Right ventricle myocardium inferior (tissue), 1 donor: ENCODE measurements at regions of chr19 and their contacts with region 1.

Region 1: GRCh38 chr19:9435279-9436268 is at the start of gene ZNF266:
- DNase-seq: peak; percentile 93
- ATAC-seq: peak; percentile 93
- total RNA-seq, gene ZNF266: 7.2 TPM

Region 2: DNA sequence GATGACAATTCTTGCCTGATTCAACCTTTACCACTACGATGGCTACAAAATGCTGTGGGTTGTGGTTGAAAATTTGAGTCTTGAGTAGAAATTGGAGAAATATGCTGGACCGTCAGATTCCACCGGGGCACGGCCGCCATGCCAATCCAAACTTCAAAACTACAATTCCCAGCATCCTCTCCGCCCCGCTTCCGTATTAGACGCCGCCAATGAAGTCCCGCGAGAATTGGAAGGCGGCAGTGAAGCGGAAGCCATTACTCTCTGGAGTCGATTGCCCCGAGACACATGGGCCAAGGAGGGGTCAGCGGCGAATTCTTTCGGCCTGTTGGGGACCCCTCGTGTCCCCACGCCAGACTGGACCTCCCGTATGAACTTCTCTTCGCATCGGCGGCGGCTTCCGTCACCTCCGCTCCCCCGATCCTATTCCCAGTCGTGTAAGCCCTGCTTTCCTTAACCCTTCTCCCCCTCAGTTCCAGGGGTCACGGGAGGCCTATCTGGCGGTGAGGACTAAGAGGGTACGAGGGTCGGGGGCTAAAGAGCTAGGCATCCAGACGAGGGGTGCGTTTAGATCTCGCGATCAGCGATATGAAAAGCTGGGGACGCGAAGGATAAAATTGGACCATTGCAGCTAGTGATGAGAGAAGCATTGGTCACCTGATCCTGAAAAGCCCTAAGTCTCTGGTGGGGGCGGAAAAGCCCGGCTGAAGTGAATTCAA is 295.3 kb before region 1 on chr19 and contains the start of gene ZNF317:
- intact Hi-C with region 1: loop called (anchors 10 kb)
- DNase-seq: peak; percentile 97
- ATAC-seq: peak; percentile 97
- total RNA-seq, gene ZNF317: 14.7 TPM

Region 3: DNA sequence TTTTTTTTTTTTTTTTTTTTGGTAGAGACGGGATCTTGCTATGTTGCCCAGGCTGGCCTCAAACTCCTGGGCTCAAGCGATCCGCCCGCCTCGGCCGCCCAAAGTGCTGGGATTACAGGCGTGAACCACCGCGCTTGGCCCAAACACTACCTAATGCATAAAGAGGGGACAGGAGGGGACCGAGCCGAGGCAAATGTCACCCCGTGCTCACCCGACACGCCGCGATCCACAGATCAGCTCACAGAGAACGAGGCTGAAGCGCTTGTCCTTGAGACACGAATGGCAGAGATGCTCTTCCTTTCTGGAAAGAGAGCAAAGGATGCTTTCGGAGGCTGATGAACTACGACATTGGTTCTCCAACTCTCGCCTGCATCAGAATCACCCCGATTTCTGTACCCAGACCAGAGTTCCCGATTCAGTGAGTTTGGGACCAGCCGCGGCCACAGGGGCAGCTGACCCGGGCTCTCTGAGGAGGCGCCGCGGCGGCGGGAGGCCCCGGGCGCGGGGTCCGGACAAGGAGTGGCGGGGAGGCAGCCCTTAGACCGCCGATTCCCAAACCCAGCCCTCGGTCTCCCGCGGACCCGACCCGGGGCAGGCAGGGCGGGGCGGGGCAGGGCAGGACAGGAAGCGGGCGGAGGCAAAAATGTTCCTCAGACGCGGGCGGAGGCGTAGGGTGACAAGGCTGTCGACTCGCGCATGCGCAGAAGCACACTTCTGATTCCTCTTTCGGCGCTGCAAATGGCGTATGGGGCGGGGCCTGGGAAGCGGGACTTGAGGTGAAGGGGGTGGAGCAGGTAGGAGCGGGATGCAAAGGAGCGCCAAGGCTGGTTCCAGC is 126.2 kb before region 1 on chr19 and contains the start of gene ZNF699:
- intact Hi-C with region 1: loop called (anchors 2 kb)
- DNase-seq: peak; percentile 99
- ATAC-seq: peak; percentile 98
- total RNA-seq, gene ZNF699: 3.5 TPM

Region 4: GRCh38 chr19:9584073-9584833 is 148.7 kb after region 1 on chr19 and contains the start of gene ZNF121:
- intact Hi-C with region 1: loop called (anchors 10 kb)
- DNase-seq: peak; percentile 93
- ATAC-seq: peak; percentile 95
- total RNA-seq, gene ZNF121: 20.7 TPM